Heart right ventricle (tissue), 16 donors: ENCODE measurements at regions of chr22 and their contacts with region 1.

Region 1: DNA sequence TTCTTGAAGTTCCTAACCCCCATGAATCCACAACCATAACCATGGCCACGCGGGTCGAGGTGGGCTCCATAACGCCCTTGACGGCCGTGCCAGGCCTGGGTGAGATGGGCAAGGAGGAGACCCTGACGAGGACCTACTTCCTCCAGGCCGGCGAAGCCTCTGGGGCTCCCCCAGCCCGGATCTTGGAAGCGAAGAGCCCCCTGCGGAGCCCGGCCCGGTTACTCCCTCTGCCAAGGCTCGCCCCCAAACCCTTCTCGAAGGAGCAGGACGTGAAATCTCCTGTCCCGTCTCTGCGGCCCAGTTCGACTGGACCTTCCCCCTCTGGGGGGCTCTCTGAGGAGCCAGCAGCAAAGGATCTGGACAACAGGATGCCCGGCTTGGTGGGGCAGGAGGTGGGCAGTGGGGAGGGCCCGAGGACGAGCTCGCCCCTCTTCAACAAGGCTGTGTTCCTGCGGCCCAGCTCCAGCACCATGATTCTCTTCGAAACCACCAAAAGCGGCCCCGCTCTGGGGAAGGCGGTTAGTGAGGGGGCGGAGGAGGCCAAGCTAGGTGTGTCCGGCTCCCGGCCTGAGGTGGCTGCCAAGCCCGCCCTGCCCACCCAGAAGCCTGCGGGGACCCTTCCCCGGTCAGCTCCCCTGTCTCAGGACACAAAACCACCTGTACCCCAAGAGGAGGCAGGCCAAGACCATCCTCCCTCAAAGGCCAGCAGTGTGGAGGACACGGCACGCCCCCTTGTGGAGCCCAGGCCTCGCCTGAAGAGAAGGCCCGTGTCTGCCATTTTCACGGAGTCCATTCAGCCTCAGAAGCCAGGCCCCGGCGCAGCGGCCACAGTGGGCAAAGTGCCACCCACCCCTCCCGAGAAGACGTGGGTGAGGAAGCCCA is 75.7 kb downstream of the KIAA1671 start:
- DNase-seq: peak; percentile 46 to 54
- ATAC-seq: peak; percentile 9 to 70 (median 40)
- H3K4me3 ChIP-seq: no peak overlapping the region
- H3K27ac ChIP-seq: peak overlapping the region in 8 of 10 donors; percentile 12 to 91 (median 52)
- H3K4me1 ChIP-seq: peaks cover 19 to 64% (median 33%) of the 10 kb centered on the region in 9 donors
- H3K27me3 ChIP-seq: no peaks in the 10 kb centered on the region
- CTCF ChIP-seq: peak; percentile 33 to 64 (median 56)

Region 2: GRCh38 chr22:24951942-24952836 is 76.0 kb before region 1 on chr22 and contains the start of gene KIAA1671:
- intact Hi-C with region 1: loop called in 8 of 10 experiments (anchors 2 to 5 kb)
- DNase-seq: peak; percentile 84 to 91
- ATAC-seq: peak; percentile 95 to 97 (median 96)
- H3K4me3 ChIP-seq: peak within 1 kb of the TSS; percentile 56 to 98 (median 78)
- H3K27ac ChIP-seq: peak within 1 kb of the TSS; percentile 34 to 94 (median 83)
- H3K4me1 ChIP-seq: peaks cover 5 to 49% (median 19%) of the 10 kb centered on the region in 9 donors
- H3K27me3 ChIP-seq: peaks cover 0 to 26% (median 0%) of the 10 kb centered on the region in 7 donors
- CTCF ChIP-seq: peak in 8 of 9 donors; percentile 95 to 100 (median 99)
- total RNA-seq, gene KIAA1671: 8.9 to 26.2 (median 14.0) TPM

Region 3: DNA sequence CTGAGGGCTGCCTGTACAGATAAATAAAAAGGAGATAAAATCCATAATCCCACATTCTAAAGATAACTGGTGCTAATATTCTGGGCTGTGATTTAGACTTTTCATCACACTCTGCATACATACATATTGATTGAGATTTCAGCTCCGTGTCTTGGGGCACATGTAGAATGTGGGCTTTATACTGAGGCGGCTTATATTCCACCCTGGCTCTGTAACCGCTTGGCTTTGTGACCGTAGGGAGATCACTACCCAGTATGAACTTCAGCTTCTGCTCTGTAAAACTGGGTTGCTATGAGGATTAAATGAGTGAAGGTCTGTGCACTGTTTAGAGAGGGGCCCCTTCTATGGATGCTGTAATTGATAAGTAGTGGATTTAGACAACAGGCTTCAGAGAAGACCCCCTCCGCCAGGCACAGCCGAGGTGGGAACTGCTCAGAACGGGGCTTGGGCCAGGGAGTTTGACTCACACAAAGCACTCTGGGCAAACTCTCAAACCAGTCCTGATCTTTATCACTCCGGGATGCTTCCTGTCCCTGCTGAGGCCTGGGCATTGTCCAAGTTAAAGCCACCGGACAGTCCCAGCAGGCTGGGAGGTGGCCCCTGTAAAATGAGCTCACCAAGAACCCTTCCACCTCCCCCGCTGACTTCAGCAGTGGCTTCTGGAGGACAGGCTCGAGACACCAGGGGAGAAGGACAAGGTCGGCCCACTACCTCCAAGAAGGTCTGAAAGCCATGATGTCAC is 58.5 kb before region 1 on chr22:
- intact Hi-C with region 1: loop called in 1 of 10 experiments (anchors 5 kb)
- DNase-seq: peak; percentile 56 to 85
- ATAC-seq: peak; percentile 79 to 93 (median 88)
- H3K4me3 ChIP-seq: peak overlapping the region in 2 of 10 donors; percentile 23 to 27
- H3K27ac ChIP-seq: peak overlapping the region; percentile 75 to 89 (median 81)
- H3K4me1 ChIP-seq: peaks cover 12 to 94% (median 61%) of the 10 kb centered on the region in 9 donors
- H3K27me3 ChIP-seq: no peaks in the 10 kb centered on the region
- CTCF ChIP-seq: no peak

Region 4: DNA sequence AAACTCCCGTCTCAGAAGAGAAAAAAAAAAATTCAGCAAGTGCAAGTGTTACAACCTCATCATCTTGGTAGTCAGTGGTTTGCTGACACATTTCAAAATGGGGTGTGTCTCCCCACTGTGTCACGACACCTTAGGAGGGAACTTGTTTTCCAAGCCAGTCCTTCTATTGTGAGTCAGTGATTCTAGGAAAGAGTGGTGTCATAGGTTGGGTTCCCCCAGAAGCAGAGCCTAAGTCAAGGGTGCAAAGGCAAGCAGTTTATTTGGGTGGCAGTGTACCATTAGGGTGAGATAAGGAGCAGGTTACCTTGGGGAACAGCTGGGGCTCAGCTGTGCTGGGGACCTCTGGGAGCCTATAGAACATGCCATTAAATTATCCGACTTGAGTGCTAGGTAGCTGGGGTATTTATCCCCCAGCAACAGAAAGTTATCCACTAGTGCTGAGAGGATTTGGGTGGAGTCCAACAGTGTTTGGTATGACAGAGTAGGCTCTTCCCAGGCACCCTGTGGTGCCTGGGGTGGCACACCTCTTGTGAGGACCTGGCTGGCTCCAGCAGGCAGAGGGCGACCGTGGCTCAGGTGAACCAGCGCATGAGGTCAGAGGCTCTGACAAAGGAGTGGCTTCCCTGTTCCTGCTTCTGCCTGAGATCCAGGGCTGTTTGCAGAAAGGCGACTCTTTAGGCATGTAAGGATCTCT is 34.0 kb before region 1 on chr22:
- intact Hi-C with region 1: loop called in 3 of 10 experiments (anchors 5 kb)
- DNase-seq: no peak
- ATAC-seq: no peak
- H3K4me3 ChIP-seq: no peak overlapping the region
- H3K27ac ChIP-seq: peak overlapping the region in 1 of 10 donors; percentile 36
- H3K4me1 ChIP-seq: peaks cover 4 to 74% (median 47%) of the 10 kb centered on the region in 9 donors
- H3K27me3 ChIP-seq: no peaks in the 10 kb centered on the region
- CTCF ChIP-seq: peak in 1 of 9 donors; percentile 8

Region 5: DNA sequence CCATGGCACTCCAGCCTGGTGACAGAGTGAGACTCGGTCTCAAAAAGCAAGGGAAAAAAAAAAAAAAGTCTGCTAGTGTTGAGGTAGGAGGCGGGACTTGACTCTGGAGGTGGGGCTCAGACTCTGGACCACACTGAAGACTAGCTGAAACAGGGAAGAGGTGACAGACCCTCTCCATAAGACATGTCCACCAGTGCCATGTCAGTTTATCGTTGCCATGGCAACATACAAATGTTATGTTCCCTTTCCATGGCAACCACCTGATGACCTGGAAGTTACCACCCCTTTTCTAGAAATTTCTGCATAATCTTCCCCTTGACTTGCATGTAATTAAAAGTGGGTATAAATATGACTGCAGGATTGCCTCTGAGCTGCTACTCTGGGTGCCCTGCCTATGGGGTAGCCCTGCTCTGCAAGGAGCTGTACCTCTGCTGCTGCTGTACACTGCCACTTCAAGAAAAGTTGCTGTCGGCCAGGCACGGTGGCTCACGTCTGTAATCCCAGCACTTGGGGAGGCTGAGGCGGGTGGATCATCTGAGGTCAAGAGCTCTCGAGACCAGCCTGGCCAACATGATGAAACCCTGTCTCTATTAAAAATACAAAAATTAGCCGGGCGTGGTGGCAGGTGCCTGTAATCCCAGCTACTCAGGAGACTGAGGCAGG is 20.6 kb before region 1 on chr22:
- intact Hi-C with region 1: loop called in 1 of 10 experiments (anchors 1 kb)
- DNase-seq: no peak
- ATAC-seq: no peak
- H3K4me3 ChIP-seq: no peak overlapping the region
- H3K27ac ChIP-seq: no peak overlapping the region
- H3K4me1 ChIP-seq: peaks cover 0 to 37% (median 6%) of the 10 kb centered on the region in 9 donors
- H3K27me3 ChIP-seq: no peaks in the 10 kb centered on the region
- CTCF ChIP-seq: no peak